Activated CD4-positive, alpha-beta T cell treated with anti-CD3 and anti-CD28 coated beads for 36 hours (primary cell): ENCODE measurements at regions of chr7 and their contacts with region 1.

Region 1: GRCh38 chr7:80781146-80781545 is 137.7 kb downstream of the SEMA3C start:
- DNase-seq: no peak
- ATAC-seq: no peak
- H3K4me3 Mint-ChIP-seq: no peak overlapping the region
- H3K27ac Mint-ChIP-seq: no peak overlapping the region
- H3K4me1 Mint-ChIP-seq: no peaks in the 10 kb centered on the region
- H3K27me3 Mint-ChIP-seq: no peaks in the 10 kb centered on the region

Region 2: DNA sequence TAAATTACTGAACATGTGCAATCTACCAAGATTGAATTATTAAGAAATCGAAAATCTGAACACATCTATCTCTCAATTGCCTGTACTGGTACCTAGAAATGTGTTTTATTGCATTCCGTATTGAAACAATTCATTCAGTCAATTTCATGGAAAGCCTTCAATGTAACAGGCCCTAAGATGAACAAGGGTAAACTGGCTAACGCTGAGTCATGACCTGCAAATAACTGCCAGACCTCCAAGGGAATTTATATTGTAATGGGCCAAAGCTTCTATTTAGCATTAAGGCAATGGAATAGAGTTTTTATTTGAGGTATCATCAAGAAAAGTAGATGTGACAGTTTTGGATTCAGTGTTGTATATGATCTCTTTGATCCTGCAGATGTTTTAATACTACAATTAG is 192.6 kb before region 1 on chr7:
- CTCF ChIA-PET with region 1: no interaction called
- POLR2A ChIA-PET with region 1: no interaction called
- intact Hi-C with region 1: no loop called
- DNase-seq: no peak
- ATAC-seq: no peak
- H3K4me3 Mint-ChIP-seq: no peak overlapping the region
- H3K27ac Mint-ChIP-seq: no peak overlapping the region
- H3K4me1 Mint-ChIP-seq: no peaks in the 10 kb centered on the region
- H3K27me3 Mint-ChIP-seq: no peaks in the 10 kb centered on the region

Region 3: DNA sequence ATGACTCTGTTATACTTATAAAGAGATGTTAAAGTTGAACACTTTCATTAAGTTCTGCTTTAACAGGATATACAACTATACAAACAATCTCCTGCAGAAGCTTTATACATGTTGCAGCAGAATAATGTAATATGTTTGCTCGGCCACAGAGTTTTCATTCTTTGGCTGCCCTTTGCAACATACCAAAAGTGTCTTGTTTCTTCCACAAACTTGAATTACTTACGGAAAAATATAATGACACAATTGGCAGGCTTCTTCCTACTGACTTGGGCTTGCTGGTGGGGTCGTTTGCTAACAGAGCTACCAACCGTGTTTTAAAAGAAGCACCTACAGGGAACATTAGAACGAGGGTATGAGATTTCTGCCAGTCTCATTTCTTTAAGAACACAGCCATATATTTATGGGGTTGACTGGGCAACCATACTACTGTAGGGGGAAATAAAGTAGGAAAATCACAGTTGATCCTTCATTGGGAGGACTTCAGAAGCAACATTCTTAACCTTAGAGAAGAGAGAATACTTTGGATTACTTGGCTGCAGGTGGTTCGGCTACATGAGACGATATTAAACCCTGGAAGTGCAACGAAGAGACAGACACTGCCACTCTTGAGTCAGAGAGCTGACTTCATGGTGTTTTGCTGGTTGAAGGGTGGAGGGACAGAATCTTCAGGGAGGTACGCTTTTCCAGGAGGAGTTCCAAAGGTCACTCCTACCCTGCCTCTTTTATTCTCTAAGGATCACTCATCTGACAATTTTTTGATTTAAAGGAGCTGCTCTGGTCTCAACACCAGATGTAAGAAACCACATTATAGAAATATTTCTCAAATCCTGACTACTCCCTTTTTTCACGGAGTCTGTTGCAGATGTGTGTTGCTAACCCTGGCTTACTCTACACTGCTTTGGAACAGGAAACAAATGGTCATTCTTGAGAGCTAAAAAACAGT is 13.8 kb after region 1 on chr7:
- CTCF ChIA-PET with region 1: no interaction called
- POLR2A ChIA-PET with region 1: no interaction called
- intact Hi-C with region 1: no loop called
- DNase-seq: no peak
- ATAC-seq: no peak
- H3K4me3 Mint-ChIP-seq: no peak overlapping the region
- H3K27ac Mint-ChIP-seq: no peak overlapping the region
- H3K4me1 Mint-ChIP-seq: no peaks in the 10 kb centered on the region
- H3K27me3 Mint-ChIP-seq: no peaks in the 10 kb centered on the region

Region 4: GRCh38 chr7:80807166-80807885 is 26.2 kb after region 1 on chr7:
- CTCF ChIA-PET with region 1: no interaction called
- POLR2A ChIA-PET with region 1: no interaction called
- intact Hi-C with region 1: no loop called
- DNase-seq: no peak
- ATAC-seq: no peak
- H3K4me3 Mint-ChIP-seq: no peak overlapping the region
- H3K27ac Mint-ChIP-seq: no peak overlapping the region
- H3K4me1 Mint-ChIP-seq: no peaks in the 10 kb centered on the region
- H3K27me3 Mint-ChIP-seq: no peaks in the 10 kb centered on the region

Region 5: GRCh38 chr7:80851894-80852476 is 70.8 kb after region 1 on chr7:
- CTCF ChIA-PET with region 1: no interaction called
- POLR2A ChIA-PET with region 1: interaction called, 10 read pairs
- intact Hi-C with region 1: no loop called
- DNase-seq: no peak
- ATAC-seq: no peak
- H3K4me3 Mint-ChIP-seq: no peak overlapping the region
- H3K27ac Mint-ChIP-seq: no peak overlapping the region
- H3K4me1 Mint-ChIP-seq: no peaks in the 10 kb centered on the region
- H3K27me3 Mint-ChIP-seq: no peaks in the 10 kb centered on the region